ENCODE measurements at regions of chr1 and their contacts with region 1.

Region 1: GRCh38 chr1:220527908-220528678 is at the start of gene MARK1:
- DNase-seq: peak; percentile 56
- H3K4me3 ChIP-seq: peak within 1 kb of the TSS; percentile 90 to 95 (median 95)
- H3K27ac ChIP-seq: peak within 1 kb of the TSS; percentile 75
- H3K4me1 ChIP-seq: peaks cover 13% of the 10 kb centered on the region
- H3K27me3 ChIP-seq: no peaks in the 10 kb centered on the region
- CTCF ChIP-seq: no peak
- total RNA-seq, gene MARK1: 9.3 to 14.7 TPM

Region 2: GRCh38 chr1:220189750-220190347 is 338.2 kb before region 1 on chr1:
- CTCF ChIA-PET with region 1: no interaction called
- dilution Hi-C with region 1: no loop called
- in situ Hi-C with region 1: no loop called
- intact Hi-C with region 1: no loop called
- DNase-seq: peak; percentile 4
- H3K4me3 ChIP-seq: no peak overlapping the region
- H3K27ac ChIP-seq: no peak overlapping the region
- H3K4me1 ChIP-seq: no peaks in the 10 kb centered on the region
- H3K27me3 ChIP-seq: no peaks in the 10 kb centered on the region
- CTCF ChIP-seq: peak; percentile 39 to 50

Region 3: GRCh38 chr1:220294846-220295301 is 233.2 kb before region 1 on chr1:
- CTCF ChIA-PET with region 1: interaction called, 6 read pairs
- dilution Hi-C with region 1: no loop called
- in situ Hi-C with region 1: loop called in 1 of 2 experiments (anchors 25 kb)
- intact Hi-C with region 1: loop called (anchors 1 kb)
- DNase-seq: peak; percentile 19
- H3K4me3 ChIP-seq: no peak overlapping the region
- H3K27ac ChIP-seq: no peak overlapping the region
- H3K4me1 ChIP-seq: no peaks in the 10 kb centered on the region
- H3K27me3 ChIP-seq: no peaks in the 10 kb centered on the region
- CTCF ChIP-seq: no peak

Region 4: DNA sequence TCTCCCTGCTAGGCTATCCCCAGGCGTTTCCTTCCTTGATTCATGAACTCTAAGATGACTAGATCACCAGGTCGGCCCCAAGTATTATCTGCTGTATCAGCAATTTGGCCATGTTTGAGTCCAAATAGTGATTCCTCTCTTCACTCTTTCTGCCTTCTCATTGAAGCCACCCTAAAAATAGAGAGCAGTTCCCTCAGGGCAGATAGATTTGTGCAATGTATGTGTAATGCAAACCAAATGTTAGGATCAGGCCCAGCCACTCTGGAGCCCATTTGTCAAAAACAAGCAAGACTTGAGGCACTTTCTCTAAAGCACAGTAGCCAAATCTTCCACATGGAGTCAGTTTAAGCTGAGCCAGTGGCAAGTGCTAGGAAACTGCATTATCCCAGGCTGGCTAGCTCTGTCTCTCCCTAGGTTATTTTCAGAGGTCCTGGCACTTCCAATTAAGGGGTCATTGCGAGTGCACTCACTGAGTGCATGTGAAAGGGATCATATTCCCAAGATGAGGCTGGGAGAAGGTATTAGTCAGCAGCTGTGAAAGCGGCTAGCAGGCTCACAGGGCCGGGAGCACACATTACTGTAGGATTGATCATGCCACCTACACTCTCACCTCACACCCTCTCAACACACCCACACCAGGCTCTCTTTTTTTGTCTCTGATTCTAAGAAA is 157.9 kb before region 1 on chr1:
- CTCF ChIA-PET with region 1: no interaction called
- dilution Hi-C with region 1: no loop called
- in situ Hi-C with region 1: no loop called
- intact Hi-C with region 1: loop called (anchors 5 kb)
- DNase-seq: peak; percentile 94
- H3K4me3 ChIP-seq: no peak overlapping the region
- H3K27ac ChIP-seq: peak overlapping the region; percentile 16
- H3K4me1 ChIP-seq: peaks cover 34% of the 10 kb centered on the region
- H3K27me3 ChIP-seq: no peaks in the 10 kb centered on the region
- CTCF ChIP-seq: no peak

Region 5: DNA sequence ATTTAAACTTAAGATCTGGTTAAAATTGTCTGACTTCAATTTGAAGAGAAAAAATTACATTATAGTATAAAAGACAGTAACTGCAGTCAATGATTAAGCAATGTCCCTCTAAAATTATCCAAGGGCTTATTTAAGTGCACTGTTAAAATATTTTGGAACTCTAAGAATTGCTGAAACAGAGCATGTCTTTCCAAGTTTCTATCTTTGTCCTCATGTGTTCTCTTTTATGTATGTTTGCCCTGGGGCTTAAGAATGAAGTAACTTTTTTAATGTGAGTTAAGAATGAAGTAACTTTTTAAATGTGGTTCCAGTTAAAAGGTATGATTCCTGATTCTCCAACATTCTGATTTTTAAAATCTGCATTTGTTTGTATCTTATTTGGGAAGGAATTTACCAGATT is 69.2 kb before region 1 on chr1:
- CTCF ChIA-PET with region 1: no interaction called
- dilution Hi-C with region 1: no loop called
- in situ Hi-C with region 1: no loop called
- intact Hi-C with region 1: loop called (anchors 5 kb)
- DNase-seq: no peak
- H3K4me3 ChIP-seq: no peak overlapping the region
- H3K27ac ChIP-seq: no peak overlapping the region
- H3K4me1 ChIP-seq: peaks cover 6% of the 10 kb centered on the region
- H3K27me3 ChIP-seq: no peaks in the 10 kb centered on the region
- CTCF ChIP-seq: no peak

Region 6: GRCh38 chr1:220497220-220497947 is 30.7 kb before region 1 on chr1:
- CTCF ChIA-PET with region 1: no interaction called
- dilution Hi-C with region 1: no loop called
- in situ Hi-C with region 1: no loop called
- intact Hi-C with region 1: loop called (anchors 2 kb)
- DNase-seq: peak; percentile 81
- H3K4me3 ChIP-seq: no peak overlapping the region
- H3K27ac ChIP-seq: peak overlapping the region; percentile 1
- H3K4me1 ChIP-seq: peaks cover 16% of the 10 kb centered on the region
- H3K27me3 ChIP-seq: no peaks in the 10 kb centered on the region
- CTCF ChIP-seq: no peak

Region 7: GRCh38 chr1:220565670-220566069 is 37.6 kb after region 1 on chr1:
- CTCF ChIA-PET with region 1: no interaction called
- dilution Hi-C with region 1: no loop called
- in situ Hi-C with region 1: no loop called
- intact Hi-C with region 1: no loop called
- DNase-seq: no peak
- H3K4me3 ChIP-seq: no peak overlapping the region
- H3K27ac ChIP-seq: no peak overlapping the region
- H3K4me1 ChIP-seq: no peaks in the 10 kb centered on the region
- H3K27me3 ChIP-seq: no peaks in the 10 kb centered on the region
- CTCF ChIP-seq: no peak

Measured in mammary epithelial cell (primary cell).